GM12878 (cell line): ENCODE measurements at regions of chr11 and their contacts with region 1.

Region 1: DNA sequence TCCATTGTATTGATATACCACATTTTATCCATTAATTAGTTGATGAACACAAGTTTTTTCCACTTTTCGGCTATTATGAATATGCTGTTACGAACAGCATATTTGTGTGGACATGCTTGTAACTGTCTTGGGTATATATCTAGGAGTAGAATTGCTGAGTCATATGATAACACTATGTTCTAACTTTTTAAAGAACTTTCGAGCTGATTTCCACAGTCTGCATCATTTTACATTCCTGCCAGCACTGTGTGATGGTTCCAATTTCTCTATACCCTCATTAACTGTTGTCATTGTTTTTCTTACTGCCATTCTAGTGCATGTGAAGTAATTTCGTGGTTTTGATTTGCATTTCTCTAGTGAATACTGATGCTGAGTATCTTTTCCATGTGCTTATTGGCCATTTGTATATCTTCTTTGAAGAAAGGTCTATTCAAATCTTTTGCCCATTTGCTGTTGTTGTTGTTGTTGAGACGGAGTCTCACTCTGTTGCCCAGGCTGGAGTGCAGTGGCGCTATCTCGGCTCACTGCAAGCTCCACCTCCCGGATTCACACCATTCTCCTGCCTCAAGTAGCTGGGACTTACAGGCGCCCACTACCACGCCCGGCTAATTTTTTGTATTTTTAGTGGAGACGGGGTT is 7.4 kb upstream of the RCE1 start:
- DNase-seq: no peak
- ATAC-seq: no peak
- H3K4me3 ChIP-seq: no peak overlapping the region
- H3K27ac ChIP-seq: no peak overlapping the region
- H3K4me1 ChIP-seq: no peaks in the 10 kb centered on the region
- H3K27me3 ChIP-seq: no peaks in the 10 kb centered on the region
- CTCF ChIP-seq: no peak
- EP300 ChIP-seq: no peak
- POLR2A ChIP-seq: no peak
- RAD21 ChIP-seq: no peak

Region 2: GRCh38 chr11:66579017-66579606 is 256.8 kb before region 1 on chr11:
- CTCF ChIA-PET with region 1: interaction called, 3 read pairs
- POLR2A ChIA-PET with region 1: no interaction called
- RAD21 ChIA-PET with region 1: no interaction called
- SMC1A ChIA-PET with region 1: interaction called, 3 read pairs
- in situ Hi-C with region 1: loop called (anchors 5 kb)
- intact Hi-C with region 1: loop called (anchors 10 kb)
- DNase-seq: no peak
- ATAC-seq: peak; percentile 91
- H3K4me3 ChIP-seq: no peak overlapping the region
- H3K27ac ChIP-seq: no peak overlapping the region
- H3K4me1 ChIP-seq: no peaks in the 10 kb centered on the region; the same call in 1 of the 2 replicates
- H3K27me3 ChIP-seq: no peaks in the 10 kb centered on the region
- CTCF ChIP-seq: peak; percentile 77 to 78 (median 77)
- EP300 ChIP-seq: no peak
- POLR2A ChIP-seq: no peak
- RAD21 ChIP-seq: peak; percentile 69

Region 3: DNA sequence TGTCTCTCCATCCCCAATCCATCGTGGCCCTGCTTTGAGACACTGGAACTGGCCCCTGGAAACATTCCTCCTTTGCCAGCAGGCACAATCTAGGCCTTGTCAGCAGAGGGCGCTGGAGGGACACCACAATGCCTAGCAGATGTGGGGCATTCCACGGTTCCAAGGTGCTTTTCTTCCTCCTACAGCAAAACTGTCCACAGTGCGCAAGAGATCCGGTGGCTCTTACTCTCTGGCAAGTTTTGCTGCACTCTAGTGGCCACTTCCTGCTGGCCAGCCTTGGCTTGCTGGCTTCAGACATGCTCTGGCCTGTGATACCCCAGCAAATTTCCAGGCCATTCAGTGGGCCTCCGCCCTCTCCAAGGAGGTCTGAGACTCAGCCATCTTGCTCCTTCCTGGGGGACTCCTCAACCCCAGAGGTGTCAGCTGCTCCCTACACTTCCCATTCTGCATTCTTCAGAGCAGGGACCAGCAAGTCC is 141.1 kb before region 1 on chr11:
- CTCF ChIA-PET with region 1: interaction called, 67 read pairs
- POLR2A ChIA-PET with region 1: interaction called, 3 read pairs
- RAD21 ChIA-PET with region 1: interaction called, 24 read pairs
- SMC1A ChIA-PET with region 1: interaction called, 38 read pairs
- in situ Hi-C with region 1: loop called (anchors 5 kb)
- intact Hi-C with region 1: loop called (anchors 1 kb)
- DNase-seq: peak; percentile 58
- ATAC-seq: peak; percentile 97
- H3K4me3 ChIP-seq: no peak overlapping the region
- H3K27ac ChIP-seq: no peak overlapping the region
- H3K4me1 ChIP-seq: no peaks in the 10 kb centered on the region
- H3K27me3 ChIP-seq: no peaks in the 10 kb centered on the region; a peak in 1 of 4 replicates
- CTCF ChIP-seq: peak; percentile 94 to 99 (median 97)
- EP300 ChIP-seq: 0 out of 4 replicates have a peak, but pooled peaks of 1 of the 2 experiments have one; percentile 8
- POLR2A ChIP-seq: no peak
- RAD21 ChIP-seq: peak; percentile 95

Region 4: DNA sequence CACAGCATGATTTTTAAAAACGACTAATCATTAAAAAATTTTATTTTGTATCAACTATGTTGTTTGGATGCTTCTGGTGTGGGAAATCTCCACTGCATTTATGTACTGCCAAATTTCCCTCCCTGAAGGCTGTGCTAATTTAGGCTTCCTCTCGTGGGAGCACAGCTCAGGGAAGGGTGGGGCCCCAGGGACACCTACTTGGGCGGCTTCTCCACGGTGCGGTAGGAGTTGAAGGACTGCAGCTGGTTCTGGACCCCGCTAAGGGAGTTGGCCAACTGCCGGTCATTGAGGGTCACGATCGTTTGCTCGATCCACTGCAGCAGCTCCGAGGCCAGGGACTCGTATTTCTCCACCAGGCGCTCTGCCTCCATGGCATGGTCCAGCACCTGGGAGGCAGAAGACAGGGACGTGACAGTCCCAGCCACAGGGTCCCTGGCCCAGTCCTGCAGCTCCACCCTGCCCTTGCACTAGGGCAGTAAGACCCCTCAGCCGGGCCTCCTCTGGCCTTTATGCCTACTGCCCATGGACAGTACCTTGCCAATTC is 125.4 kb before region 1 on chr11:
- CTCF ChIA-PET with region 1: no interaction called
- POLR2A ChIA-PET with region 1: no interaction called
- RAD21 ChIA-PET with region 1: no interaction called
- SMC1A ChIA-PET with region 1: no interaction called
- in situ Hi-C with region 1: no loop called
- intact Hi-C with region 1: no loop called
- DNase-seq: no peak
- ATAC-seq: no peak
- H3K4me3 ChIP-seq: no peak overlapping the region
- H3K27ac ChIP-seq: no peak overlapping the region
- H3K4me1 ChIP-seq: no peaks in the 10 kb centered on the region
- H3K27me3 ChIP-seq: no peaks in the 10 kb centered on the region; a peak in 1 of 4 replicates
- CTCF ChIP-seq: no peak
- EP300 ChIP-seq: no peak
- POLR2A ChIP-seq: no peak
- RAD21 ChIP-seq: no peak

Region 5: DNA sequence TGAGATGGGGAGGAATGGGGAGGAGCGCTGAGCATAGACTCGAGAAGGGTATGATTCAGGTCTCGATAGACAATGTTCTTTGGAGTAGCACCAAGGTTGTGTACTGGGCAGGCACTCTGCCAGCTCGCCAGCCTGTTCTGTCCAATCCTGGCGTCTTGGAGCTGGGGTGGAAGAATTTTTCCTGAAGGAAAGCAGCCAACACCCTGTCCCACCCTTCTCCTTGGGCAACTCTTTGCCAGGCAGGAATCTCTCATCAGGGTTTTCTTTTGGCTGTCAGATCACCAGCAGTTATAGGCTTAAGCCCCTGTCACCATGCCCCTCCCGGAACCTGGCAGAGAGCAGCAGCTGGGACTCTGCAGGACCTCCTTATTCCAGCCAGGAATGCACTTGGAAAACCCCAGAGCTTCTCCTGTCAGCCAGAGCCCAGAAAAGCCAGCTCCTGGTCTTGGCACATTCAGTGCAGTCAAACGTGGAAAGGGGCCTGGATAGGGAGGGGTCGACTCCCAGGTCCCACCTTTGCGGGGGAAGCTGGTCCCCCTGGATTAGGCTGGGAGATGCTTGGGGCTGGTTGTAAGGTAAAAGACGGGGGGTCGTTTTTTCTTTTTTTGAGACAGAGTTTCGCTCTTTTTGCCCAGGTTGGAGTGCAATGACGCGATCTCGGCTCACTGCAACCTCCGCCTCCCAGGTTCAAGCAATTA is 92.5 kb before region 1 on chr11:
- CTCF ChIA-PET with region 1: interaction called, 5 read pairs
- POLR2A ChIA-PET with region 1: no interaction called
- RAD21 ChIA-PET with region 1: no interaction called
- SMC1A ChIA-PET with region 1: interaction called, 14 read pairs
- in situ Hi-C with region 1: no loop called
- intact Hi-C with region 1: no loop called
- DNase-seq: no peak
- ATAC-seq: no peak
- H3K4me3 ChIP-seq: peak overlapping the region; percentile 91
- H3K27ac ChIP-seq: no peak overlapping the region
- H3K4me1 ChIP-seq: no peaks in the 10 kb centered on the region
- H3K27me3 ChIP-seq: no peaks in the 10 kb centered on the region; a peak in 1 of 4 replicates
- CTCF ChIP-seq: no peak
- EP300 ChIP-seq: no peak
- POLR2A ChIP-seq: no peak
- RAD21 ChIP-seq: no peak

Region 6: GRCh38 chr11:66883016-66883968 is 47.4 kb after region 1 on chr11:
- CTCF ChIA-PET with region 1: interaction called, 11 read pairs
- POLR2A ChIA-PET with region 1: no interaction called
- RAD21 ChIA-PET with region 1: interaction called, 6 read pairs
- SMC1A ChIA-PET with region 1: no interaction called
- in situ Hi-C with region 1: no loop called
- intact Hi-C with region 1: loop called (anchors 2 kb)
- DNase-seq: no peak
- ATAC-seq: peak; percentile 94
- H3K4me3 ChIP-seq: no peak overlapping the region
- H3K27ac ChIP-seq: no peak overlapping the region
- H3K4me1 ChIP-seq: peaks cover 3% of the 10 kb centered on the region; the same call in 1 of the 2 replicates
- H3K27me3 ChIP-seq: peaks cover 0 to 3% of the 10 kb centered on the region in 2 experiments; a peak in 2 of 4 replicates
- CTCF ChIP-seq: peak; percentile 71 to 77 (median 72)
- EP300 ChIP-seq: no peak
- POLR2A ChIP-seq: no peak
- RAD21 ChIP-seq: peak; percentile 71

Region 7: DNA sequence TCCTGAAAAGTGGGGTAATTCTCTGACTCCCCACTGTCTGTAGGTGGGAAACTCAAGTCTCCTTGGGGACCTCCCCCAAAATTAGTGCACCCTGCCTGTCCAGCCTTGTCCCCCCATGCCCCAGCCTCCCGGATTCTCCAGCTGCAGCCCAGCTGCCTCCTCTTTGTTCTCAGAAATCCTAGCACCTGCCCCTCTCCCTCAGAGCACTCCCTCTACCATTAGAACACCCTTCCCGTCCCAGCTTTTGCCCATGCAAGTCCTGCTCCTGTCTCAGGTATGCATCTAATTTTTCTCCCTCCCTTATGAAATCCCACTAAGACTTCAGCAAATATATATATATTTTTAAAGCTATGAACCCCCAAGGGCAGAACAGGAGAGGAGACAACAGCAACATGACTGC is 58.3 kb after region 1 on chr11:
- CTCF ChIA-PET with region 1: no interaction called
- POLR2A ChIA-PET with region 1: no interaction called
- RAD21 ChIA-PET with region 1: no interaction called
- SMC1A ChIA-PET with region 1: no interaction called
- in situ Hi-C with region 1: no loop called
- intact Hi-C with region 1: no loop called
- DNase-seq: no peak
- ATAC-seq: no peak
- H3K4me3 ChIP-seq: no peak overlapping the region
- H3K27ac ChIP-seq: no peak overlapping the region
- H3K4me1 ChIP-seq: peaks cover 15% of the 10 kb centered on the region
- H3K27me3 ChIP-seq: peaks cover 0 to 2% of the 10 kb centered on the region in 2 experiments; a peak in 2 of 4 replicates
- CTCF ChIP-seq: no peak
- EP300 ChIP-seq: no peak
- POLR2A ChIP-seq: no peak
- RAD21 ChIP-seq: no peak